A549 (cell line): ENCODE measurements at regions of chr15 and their contacts with region 1.

Region 1: DNA sequence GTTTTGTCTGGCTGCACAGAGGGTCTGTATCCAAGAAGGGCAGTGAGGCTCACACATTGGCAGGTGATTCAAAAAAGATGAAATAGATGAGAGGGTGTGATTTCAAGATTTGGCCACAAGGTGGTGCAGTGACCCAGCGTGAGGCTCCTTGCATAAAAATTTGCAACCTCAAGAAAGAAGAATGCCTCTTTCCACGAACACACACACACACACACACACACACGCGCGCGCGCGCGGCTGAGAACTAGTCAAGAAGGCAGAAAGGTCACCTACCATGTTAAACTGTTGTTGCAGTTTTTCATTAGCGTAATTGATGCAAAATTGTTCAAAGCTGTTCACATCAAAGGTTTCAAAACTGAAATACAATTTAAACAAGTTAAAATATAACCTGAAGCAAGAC is 39.2 kb downstream of the MYO5C start:
- DNase-seq: peak; percentile 80 to 86
- ATAC-seq: peak in 1 of 2 experiments; percentile 37; a peak in 4 of 6 replicates
- H3K4me3 ChIP-seq: no peak overlapping the region
- H3K27ac ChIP-seq: no peak overlapping the region; a peak in 1 of 6 replicates
- H3K4me1 ChIP-seq: peaks cover 50% of the 10 kb centered on the region
- CTCF ChIP-seq: peak; percentile 96
- EP300 ChIP-seq: no peak
- POLR2A ChIP-seq: no peak
- RAD21 ChIP-seq: peak; percentile 97 to 99

Region 2: DNA sequence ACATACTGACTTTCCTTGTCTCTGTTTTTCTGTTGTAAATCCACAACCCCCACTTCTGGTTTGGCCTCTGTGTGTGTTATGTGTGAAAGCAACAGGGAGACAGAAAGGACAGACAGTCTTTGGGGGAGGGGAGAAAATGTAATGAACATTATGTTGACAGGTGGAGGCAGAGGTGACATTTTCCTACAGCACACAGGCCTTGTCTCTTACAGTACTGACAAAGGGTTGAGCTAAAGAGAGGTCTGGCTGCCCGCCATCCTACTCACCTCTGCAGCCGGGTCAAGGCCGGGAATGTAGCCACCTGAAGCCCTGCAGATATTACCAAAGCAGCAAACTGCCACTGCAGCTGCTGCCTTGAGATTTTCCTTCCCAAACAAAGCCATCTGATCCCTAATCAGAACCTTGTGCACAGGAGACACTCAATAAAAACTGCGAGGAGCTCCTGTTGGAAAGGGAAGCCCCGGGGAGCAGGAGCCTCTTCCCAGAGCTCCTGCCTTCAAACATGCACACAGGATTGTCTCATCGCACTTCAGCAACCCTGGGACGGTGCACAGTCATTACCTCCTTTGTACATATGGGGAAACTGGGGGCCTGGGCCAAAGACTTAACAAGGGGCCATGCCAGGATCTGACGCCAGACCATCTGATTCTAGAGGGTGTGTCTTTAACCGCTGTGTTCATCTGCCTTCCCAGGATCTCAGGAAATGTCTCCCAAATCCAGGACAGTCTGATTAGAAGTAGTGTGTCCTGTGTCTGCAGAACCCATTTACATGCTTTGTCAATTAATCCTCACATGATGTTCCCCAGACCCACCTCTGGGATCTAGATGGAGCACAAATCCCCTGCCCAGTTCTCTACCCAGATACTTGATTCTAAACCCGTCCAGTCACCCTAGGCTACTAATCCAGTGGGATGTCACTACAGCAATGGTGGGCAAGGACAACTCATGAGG is 25.0 kb after region 1 on chr15:
- CTCF ChIA-PET with region 1: interaction called, 36 read pairs
- POLR2A ChIA-PET with region 1: interaction called, 3 read pairs
- DNase-seq: no peak
- ATAC-seq: no peak
- H3K4me3 ChIP-seq: no peak overlapping the region
- H3K27ac ChIP-seq: no peak overlapping the region
- H3K4me1 ChIP-seq: peaks cover 13% of the 10 kb centered on the region
- CTCF ChIP-seq: no peak
- EP300 ChIP-seq: no peak
- POLR2A ChIP-seq: no peak
- RAD21 ChIP-seq: no peak

Region 3: DNA sequence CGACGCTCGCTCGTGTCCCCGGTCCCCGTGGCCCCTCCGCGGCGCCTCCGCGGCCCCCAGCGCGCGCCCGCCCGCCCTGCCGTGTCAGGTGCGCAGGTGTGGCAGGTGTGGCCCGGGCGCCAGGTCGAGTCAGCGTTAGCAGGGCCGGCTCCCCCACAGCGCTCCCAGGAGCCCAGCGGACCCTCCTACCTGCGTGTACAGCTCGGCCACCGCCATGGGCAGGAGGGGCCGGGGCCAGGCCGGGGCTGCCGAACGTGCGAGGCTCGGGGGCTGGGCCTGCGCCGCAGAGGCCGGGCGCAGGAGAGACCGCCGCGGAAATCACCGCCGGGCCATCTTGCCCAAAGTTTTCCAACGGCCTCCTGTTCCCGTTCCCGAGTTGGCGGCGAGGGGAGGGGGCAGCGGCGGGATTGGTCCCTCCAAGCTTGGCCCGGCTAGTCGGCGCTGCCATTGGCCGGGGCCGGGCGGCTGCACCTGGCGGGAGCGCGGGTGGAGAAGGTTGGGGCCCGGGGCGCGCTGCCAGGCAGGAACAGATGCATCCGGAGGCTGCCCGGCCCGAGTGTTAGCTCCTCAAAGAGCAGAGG is 39.1 kb after region 1 on chr15 and contains the start of gene MYO5C:
- CTCF ChIA-PET with region 1: interaction called, 22 read pairs
- POLR2A ChIA-PET with region 1: no interaction called
- DNase-seq: peak; percentile 83 to 86
- ATAC-seq: peak; percentile 90 to 95
- H3K4me3 ChIP-seq: peak within 1 kb of the TSS; percentile 76
- H3K27ac ChIP-seq: peak within 1 kb of the TSS; percentile 88 to 89
- H3K4me1 ChIP-seq: peaks cover 27% of the 10 kb centered on the region
- CTCF ChIP-seq: no peak
- EP300 ChIP-seq: no peak
- POLR2A ChIP-seq: no peak
- RAD21 ChIP-seq: no peak
- polyA plus RNA-seq, gene MYO5C: 26.9 and 27.6 TPM in 2 replicates

Region 4: GRCh38 chr15:52308446-52309153 is 52.2 kb after region 1 on chr15:
- CTCF ChIA-PET with region 1: interaction called, 24 read pairs
- POLR2A ChIA-PET with region 1: no interaction called
- DNase-seq: no peak
- ATAC-seq: peak; percentile 30 to 34; a peak in 4 of 6 replicates
- H3K4me3 ChIP-seq: no peak overlapping the region
- H3K27ac ChIP-seq: no peak overlapping the region
- H3K4me1 ChIP-seq: peaks cover 13% of the 10 kb centered on the region
- CTCF ChIP-seq: no peak
- EP300 ChIP-seq: no peak
- POLR2A ChIP-seq: no peak
- RAD21 ChIP-seq: no peak

Region 5: DNA sequence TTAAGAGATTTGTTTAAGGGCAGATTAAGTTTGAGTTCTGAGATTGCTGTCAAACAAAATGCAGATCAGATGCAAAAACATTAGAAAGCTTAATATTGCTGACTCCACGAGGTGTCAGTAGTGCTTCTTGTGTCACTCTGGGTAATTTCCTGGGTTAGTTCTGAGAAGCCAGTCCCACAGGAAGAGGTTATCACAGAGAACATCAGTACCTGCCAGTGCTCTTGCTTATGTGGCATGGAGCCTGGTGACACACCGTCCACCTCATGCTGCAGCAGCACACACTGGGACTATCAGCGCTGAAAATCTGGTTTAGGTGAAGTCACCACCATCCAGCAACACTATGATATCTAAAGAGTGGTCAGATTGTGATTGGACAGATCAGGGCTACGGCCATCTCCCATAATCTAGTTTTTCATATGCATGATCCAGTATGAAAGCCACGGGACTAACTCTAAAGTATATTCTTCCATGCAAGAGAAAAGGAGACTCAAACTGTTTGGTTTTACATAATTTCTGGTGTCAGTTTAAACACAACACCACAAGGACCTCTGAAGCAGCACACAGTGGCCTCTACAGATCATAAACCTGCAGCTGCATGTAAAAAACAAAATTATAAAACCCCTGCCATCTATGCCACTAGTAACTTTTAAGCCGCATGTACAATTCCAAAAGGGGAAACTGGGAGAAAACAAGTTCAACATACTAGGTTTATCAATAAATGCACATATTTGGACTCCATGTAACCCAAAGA is 75.3 kb after region 1 on chr15:
- CTCF ChIA-PET with region 1: interaction called, 30 read pairs
- POLR2A ChIA-PET with region 1: no interaction called
- DNase-seq: peak; percentile 44 to 75
- ATAC-seq: peak; percentile 79 to 81
- H3K4me3 ChIP-seq: no peak overlapping the region
- H3K27ac ChIP-seq: 0 out of 6 replicates have a peak overlapping the region, but pooled peaks of 1 of the 2 experiments have one; percentile 2
- H3K4me1 ChIP-seq: peaks cover 46% of the 10 kb centered on the region
- CTCF ChIP-seq: peak; percentile 71
- EP300 ChIP-seq: no peak
- POLR2A ChIP-seq: no peak
- RAD21 ChIP-seq: peak; percentile 88 to 93

Region 6: DNA sequence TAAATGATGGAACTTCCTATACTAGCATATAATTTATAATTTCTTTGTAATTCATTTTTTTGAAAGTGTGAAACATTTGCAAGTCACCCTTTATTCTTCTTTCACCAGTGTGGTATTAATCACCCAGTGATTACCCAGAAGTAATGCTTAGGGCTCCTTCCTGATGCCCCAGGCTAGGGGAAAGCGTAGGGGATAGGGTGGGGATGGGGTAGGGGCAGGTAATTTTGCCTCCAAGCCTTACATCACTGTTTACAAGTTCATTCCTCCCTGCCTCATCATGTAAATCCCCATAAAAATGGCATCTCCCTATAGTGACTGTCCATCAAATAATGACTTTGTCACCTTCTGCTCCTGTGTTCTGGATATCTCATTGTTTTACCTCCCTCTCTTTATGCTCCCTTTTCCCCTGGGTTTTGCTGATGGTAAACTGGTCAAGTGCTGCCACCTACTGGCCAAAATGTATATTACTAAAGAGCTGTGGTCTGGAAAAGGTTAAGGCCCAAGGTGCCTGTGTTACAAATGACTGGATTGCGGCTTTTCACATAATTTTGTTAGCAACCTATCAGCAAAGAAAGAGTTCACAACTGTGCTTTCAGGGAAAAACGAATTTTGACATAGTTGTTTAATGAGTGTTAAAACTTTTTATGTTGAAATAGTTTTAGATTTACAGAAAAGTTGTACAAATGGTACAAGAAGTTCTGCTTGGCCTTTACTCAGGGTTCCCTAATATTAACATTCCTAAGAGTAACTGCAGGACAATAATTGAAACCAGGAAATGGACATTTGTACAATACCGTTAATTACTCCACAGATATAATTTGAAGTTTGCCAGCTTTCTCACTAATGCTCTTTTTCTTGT is 479.1 kb after region 1 on chr15:
- CTCF ChIA-PET with region 1: interaction called, 180 read pairs
- POLR2A ChIA-PET with region 1: interaction called, 4 read pairs
- DNase-seq: peak; percentile 83
- ATAC-seq: peak; percentile 90 to 96; a peak in 5 of 6 replicates
- H3K4me3 ChIP-seq: no peak overlapping the region
- H3K27ac ChIP-seq: no peak overlapping the region
- H3K4me1 ChIP-seq: no peaks in the 10 kb centered on the region
- CTCF ChIP-seq: peak; percentile 95
- EP300 ChIP-seq: no peak
- POLR2A ChIP-seq: no peak
- RAD21 ChIP-seq: peak; percentile 98 to 99